A549 (cell line): ENCODE measurements at regions of chr12 and their contacts with region 1.

Region 1: GRCh38 chr12:79629561-79629960 is 61.2 kb downstream of the PAWR start:
- DNase-seq: no peak
- ATAC-seq: no peak
- H3K4me3 ChIP-seq: no peak overlapping the region
- H3K27ac ChIP-seq: peak overlapping the region in 1 of 2 experiments; percentile 5; a peak in 1 of 6 replicates
- H3K4me1 ChIP-seq: peaks cover 22% of the 10 kb centered on the region; the same call in 2 of the 3 replicates
- CTCF ChIP-seq: no peak
- EP300 ChIP-seq: no peak
- POLR2A ChIP-seq: no peak
- RAD21 ChIP-seq: no peak

Region 2: DNA sequence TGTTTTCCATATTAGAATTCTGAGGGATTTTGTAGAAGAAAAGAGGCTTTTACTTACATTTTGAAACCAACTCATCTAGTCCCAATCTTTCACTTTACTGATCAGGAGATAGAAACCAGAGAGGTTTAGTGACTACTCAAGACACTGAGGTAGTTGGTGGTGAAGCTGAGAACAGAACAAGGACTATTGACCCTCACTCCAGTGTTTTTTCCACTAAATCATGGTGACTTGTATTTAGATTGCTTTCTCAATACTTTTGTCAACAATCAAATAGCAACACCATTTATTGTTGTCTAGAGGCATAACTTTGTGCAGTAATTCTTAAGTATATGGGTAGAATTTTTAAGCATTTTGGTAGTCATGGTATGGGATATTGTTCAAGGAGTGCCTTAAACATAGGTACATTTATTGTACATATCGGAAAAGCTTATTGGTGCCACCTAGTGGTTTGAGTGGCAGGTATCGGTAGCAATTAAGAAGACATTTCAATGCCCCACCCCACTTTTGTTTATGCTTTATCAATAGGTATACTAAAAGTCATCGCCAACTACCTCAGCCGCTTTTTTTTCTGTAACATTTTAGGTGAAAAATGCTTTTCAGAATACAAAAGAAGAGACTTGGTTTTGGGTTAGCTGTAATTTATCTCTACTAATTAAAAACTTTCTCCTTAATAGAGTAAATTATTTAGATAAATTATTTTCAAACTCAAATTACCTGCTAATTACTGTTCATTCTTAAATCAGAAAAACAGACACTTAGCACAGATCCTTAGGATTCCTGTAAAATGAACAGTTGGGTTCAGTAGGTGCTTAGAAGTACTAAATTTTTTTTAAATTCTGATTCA is 108.5 kb after region 1 on chr12:
- CTCF ChIA-PET with region 1: no interaction called
- POLR2A ChIA-PET with region 1: no interaction called
- DNase-seq: peak; percentile 52 to 79
- ATAC-seq: peak; percentile 76 to 91
- H3K4me3 ChIP-seq: no peak overlapping the region
- H3K27ac ChIP-seq: peak overlapping the region; percentile 12 to 48; a peak in 4 of 6 replicates
- H3K4me1 ChIP-seq: peaks cover 8% of the 10 kb centered on the region; the same call in 1 of the 3 replicates
- CTCF ChIP-seq: peak; percentile 88
- EP300 ChIP-seq: no peak
- POLR2A ChIP-seq: no peak
- RAD21 ChIP-seq: peak; percentile 89 to 90

Region 3: GRCh38 chr12:79858518-79858917 is 229.0 kb after region 1 on chr12:
- CTCF ChIA-PET with region 1: no interaction called
- POLR2A ChIA-PET with region 1: interaction called, 14 read pairs
- DNase-seq: no peak
- ATAC-seq: peak in 1 of 2 experiments; percentile 51; a peak in 3 of 6 replicates
- H3K4me3 ChIP-seq: no peak overlapping the region
- H3K27ac ChIP-seq: 0 out of 6 replicates have a peak overlapping the region, but pooled peaks of 1 of the 2 experiments have one; percentile 26
- H3K4me1 ChIP-seq: peaks cover 11% of the 10 kb centered on the region; the same call in 2 of the 3 replicates
- CTCF ChIP-seq: no peak
- EP300 ChIP-seq: no peak
- POLR2A ChIP-seq: no peak
- RAD21 ChIP-seq: no peak